ENCODE measurements at regions of chr2 and their contacts with region 1.

Region 1: DNA sequence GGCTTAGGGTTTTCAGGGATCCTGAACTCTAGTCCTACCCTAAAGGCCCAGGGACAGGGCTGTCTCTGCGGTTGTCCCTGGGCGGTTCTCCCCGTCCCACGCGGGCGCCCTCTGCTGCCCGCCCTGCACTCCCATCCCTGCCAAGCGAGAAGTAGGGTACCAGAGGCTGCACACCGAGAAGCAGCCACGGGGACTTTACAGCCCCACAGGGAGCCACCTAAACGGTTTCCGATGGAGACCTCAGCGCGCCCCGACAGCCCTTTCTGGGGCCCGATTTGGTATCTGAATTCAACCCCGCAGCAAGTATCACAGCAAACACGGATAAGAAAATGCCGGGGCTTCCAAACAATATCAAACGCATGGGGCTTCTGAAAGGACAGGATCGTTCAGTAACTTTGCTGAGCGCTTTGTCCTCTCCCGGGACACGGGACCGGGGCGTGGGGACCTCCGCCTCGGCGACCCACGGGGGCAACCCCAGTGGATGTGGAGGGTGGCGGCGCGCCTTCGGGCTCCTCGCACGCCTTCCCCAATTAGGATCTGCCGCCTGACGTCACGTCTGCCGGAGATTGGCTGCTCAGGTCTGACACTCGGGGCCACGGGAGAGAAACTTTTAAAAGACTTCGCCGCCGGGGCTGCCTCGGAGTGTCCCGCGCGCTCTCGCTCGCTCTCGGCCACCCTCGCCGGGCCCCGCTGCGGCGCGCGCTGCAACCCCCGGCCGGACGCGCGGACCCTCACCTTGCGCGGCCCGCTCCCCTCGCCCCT is at the start of gene LTBP1:
- DNase-seq: peak; percentile 85 to 92 (median 87)
- ATAC-seq: peak; percentile 84 to 93 (median 87)
- H3K4me3 ChIP-seq: peak within 1 kb of the TSS; percentile 56 to 94 (median 79)
- H3K27ac ChIP-seq: peak within 1 kb of the TSS; percentile 76 to 95 (median 91)
- H3K4me1 ChIP-seq: peaks cover 0 to 33% (median 7%) of the 10 kb centered on the region in 12 donors
- H3K27me3 ChIP-seq: peaks cover 0 to 24% (median 0%) of the 10 kb centered on the region in 9 donors
- CTCF ChIP-seq: peak; percentile 62 to 93 (median 78)
- POLR2A ChIP-seq: peak in 1 of 2 donors; percentile 80
- total RNA-seq, gene LTBP1: 63.4 to 150 (median 103) TPM

Region 2: GRCh38 chr2:32792416-32792815 is 154.1 kb before region 1 on chr2:
- intact Hi-C with region 1: loop called in 1 of 10 experiments (anchors 5 kb)
- DNase-seq: peak in 4 of 5 donors; percentile 48 to 65 (median 60)
- ATAC-seq: peak; percentile 79 to 94 (median 92)
- H3K4me3 ChIP-seq: no peak overlapping the region
- H3K27ac ChIP-seq: peak overlapping the region in 6 of 12 donors; percentile 0 to 57 (median 14)
- H3K4me1 ChIP-seq: peaks cover 0 to 33% (median 24%) of the 10 kb centered on the region in 12 donors
- H3K27me3 ChIP-seq: no peaks in the 10 kb centered on the region
- CTCF ChIP-seq: no peak
- POLR2A ChIP-seq: no peak

Region 3: DNA sequence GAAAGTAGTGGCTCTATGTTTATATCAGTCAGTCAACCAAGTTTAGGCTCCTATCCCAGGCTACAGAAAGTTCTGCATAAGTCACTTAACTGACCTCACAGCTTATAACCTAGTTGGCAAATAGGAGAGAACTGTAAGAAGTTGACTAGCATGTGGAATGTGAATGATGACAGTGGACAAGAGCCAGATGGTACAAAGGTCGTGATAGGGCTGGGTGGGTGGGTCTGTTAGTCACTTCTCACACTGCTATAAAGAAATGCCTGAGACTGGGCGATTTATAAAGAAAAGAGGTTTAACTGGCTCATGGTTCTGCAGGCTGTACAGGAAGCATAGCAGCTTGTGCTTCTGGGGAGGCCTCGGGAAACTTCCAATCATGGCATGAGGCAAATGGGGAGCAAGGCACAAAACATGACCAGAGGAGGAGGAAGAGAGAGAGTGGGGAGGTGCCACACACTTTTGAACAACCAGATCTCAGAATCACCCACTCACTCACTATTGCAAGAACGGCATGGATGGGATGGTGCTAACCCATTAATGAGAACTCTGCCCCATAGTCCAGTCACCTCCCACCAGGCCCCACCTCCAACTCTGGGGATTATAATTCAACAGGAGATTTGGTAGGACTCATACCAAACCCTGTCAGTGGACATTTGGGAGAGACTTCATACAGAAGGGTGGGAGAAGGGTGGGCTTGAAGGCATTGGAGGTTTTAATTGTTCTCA is 69.1 kb after region 1 on chr2:
- intact Hi-C with region 1: loop called in 5 of 10 experiments (anchors 5 to 10 kb)
- DNase-seq: peak in 1 of 5 donors; percentile 41
- ATAC-seq: peak; percentile 74 to 92 (median 90)
- H3K4me3 ChIP-seq: no peak overlapping the region
- H3K27ac ChIP-seq: peak overlapping the region in 10 of 12 donors; percentile 48 to 90 (median 71)
- H3K4me1 ChIP-seq: peaks cover 0 to 68% (median 21%) of the 10 kb centered on the region in 12 donors
- H3K27me3 ChIP-seq: no peaks in the 10 kb centered on the region
- CTCF ChIP-seq: no peak
- POLR2A ChIP-seq: no peak

Region 4: DNA sequence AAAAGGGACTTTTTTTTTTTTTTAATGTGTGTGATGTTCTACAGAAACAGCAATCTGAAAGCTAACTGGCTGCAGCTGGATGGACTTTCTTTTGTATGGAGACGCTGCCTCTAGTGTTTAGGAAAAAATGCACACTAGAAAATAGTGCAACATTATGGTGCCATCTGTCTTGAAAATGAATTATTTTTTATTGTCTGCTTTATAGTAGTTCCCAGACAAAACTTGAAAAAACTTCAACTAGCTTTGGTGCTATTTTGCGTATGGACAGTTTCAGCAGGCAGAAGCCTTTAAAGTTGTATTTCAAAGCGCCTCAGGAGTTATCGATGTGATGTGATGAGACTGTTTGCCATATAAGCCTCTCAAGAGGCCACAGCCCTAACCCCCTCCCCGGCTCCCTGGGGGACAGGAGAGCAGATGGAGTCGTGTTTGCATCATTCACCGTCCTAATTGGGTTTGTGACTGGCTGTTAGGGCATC is 87.1 kb after region 1 on chr2:
- intact Hi-C with region 1: loop called in 7 of 10 experiments (anchors 2 to 5 kb)
- DNase-seq: no peak
- ATAC-seq: peak; percentile 53 to 83 (median 72)
- H3K4me3 ChIP-seq: peak overlapping the region in 8 of 12 donors; percentile 9 to 46 (median 35)
- H3K27ac ChIP-seq: peak overlapping the region in 2 of 12 donors; percentile 7 to 69
- H3K4me1 ChIP-seq: peaks cover 0 to 25% (median 5%) of the 10 kb centered on the region in 12 donors
- H3K27me3 ChIP-seq: no peaks in the 10 kb centered on the region
- CTCF ChIP-seq: peak; percentile 30 to 79 (median 68)
- POLR2A ChIP-seq: no peak

Region 5: GRCh38 chr2:33059471-33060156 is 113.1 kb after region 1 on chr2:
- intact Hi-C with region 1: no loop called
- DNase-seq: no peak
- ATAC-seq: peak; percentile 73 to 87 (median 86)
- H3K4me3 ChIP-seq: peak overlapping the region in 4 of 12 donors; percentile 14 to 36 (median 22)
- H3K27ac ChIP-seq: peak overlapping the region; percentile 31 to 84 (median 74)
- H3K4me1 ChIP-seq: peaks cover 0 to 13% (median 3%) of the 10 kb centered on the region in 12 donors
- H3K27me3 ChIP-seq: no peaks in the 10 kb centered on the region
- CTCF ChIP-seq: no peak
- POLR2A ChIP-seq: no peak

Region 6: DNA sequence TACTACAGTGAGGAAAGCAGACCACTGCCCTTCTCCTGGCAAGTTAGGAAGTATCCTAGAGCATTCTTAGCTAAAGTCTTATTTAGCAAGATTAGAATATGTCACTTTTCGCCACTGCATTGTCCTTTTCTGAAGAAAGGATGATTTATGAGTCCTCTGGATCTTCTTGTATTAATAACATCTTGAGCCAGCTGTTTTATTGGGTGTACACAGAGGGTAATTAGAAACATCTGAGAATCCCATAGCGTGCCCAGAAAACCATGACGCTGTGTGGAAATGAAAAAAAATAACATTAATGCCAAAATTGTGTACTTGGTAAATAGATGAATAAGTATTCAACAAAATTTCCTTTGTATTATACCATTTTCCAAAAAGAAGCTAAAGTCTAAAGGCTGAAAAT is 199.0 kb after region 1 on chr2:
- intact Hi-C with region 1: no loop called
- DNase-seq: no peak
- ATAC-seq: peak in 2 of 4 donors; percentile 62 to 73
- H3K4me3 ChIP-seq: no peak overlapping the region
- H3K27ac ChIP-seq: peak overlapping the region in 9 of 12 donors; percentile 10 to 68 (median 30)
- H3K4me1 ChIP-seq: peaks cover 0 to 66% (median 24%) of the 10 kb centered on the region in 12 donors
- H3K27me3 ChIP-seq: no peaks in the 10 kb centered on the region
- CTCF ChIP-seq: no peak
- POLR2A ChIP-seq: no peak

Region 7: GRCh38 chr2:33267756-33268155 is 321.3 kb after region 1 on chr2:
- intact Hi-C with region 1: loop called in 1 of 10 experiments (anchors 10 kb)
- DNase-seq: no peak
- ATAC-seq: no peak
- H3K4me3 ChIP-seq: no peak overlapping the region
- H3K27ac ChIP-seq: peak overlapping the region in 1 of 12 donors; percentile 48
- H3K4me1 ChIP-seq: peaks cover 0 to 24% (median 9%) of the 10 kb centered on the region in 12 donors
- H3K27me3 ChIP-seq: no peaks in the 10 kb centered on the region
- CTCF ChIP-seq: no peak
- POLR2A ChIP-seq: no peak